GM12878 (cell line): ENCODE measurements at regions of chr17 and their contacts with region 1.

Region 1: DNA sequence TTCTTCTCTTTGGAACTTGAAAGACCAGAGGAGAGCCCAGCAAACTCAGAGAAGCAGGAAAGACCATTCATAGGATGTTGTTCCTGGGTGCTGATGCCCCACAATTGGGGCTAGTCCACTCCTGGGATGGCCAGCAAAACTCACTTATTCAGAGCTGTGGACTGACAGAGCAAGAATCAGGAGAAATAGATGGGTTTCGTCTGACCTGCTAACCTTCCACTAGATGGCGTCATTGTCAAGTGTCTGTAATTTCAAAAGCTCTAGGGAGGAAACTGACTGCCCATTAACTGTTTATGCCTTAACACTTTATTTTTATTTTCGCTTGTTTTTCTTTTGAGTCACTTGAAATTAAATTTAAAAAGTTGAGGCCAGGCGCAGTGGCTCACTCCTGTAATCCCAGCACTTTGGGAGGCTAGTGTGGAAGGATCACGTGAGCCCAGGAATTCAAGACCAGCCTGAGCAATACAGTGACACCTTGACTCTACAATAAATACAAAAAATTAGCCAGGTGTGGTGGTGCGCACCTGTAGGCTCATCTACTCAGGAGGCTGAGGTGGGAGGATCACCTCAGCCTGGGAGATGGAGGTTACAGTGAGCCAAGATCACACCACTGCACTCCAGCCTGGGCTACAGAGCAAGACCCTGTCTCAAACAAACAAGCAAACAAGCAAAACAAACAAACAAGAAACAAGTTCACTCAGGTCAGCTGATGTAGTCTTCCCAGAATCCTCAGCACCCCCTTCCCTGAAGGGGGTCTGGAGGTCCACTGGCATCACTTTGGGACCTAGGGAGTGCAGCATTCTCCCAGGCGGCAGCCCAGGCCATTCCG is 28.6 kb upstream of the MILR1 start:
- DNase-seq: no peak
- ATAC-seq: peak; percentile 91
- H3K4me3 ChIP-seq: no peak overlapping the region
- H3K27ac ChIP-seq: no peak overlapping the region
- H3K4me1 ChIP-seq: no peaks in the 10 kb centered on the region
- H3K27me3 ChIP-seq: no peaks in the 10 kb centered on the region
- CTCF ChIP-seq: peak; percentile 66 to 72 (median 69)
- EP300 ChIP-seq: no peak
- POLR2A ChIP-seq: no peak
- RAD21 ChIP-seq: peak; percentile 91

Region 2: GRCh38 chr17:64320613-64321553 is 99.5 kb before region 1 on chr17:
- CTCF ChIA-PET with region 1: interaction called, 627 read pairs
- POLR2A ChIA-PET with region 1: interaction called, 5 read pairs
- RAD21 ChIA-PET with region 1: interaction called, 75 read pairs
- SMC1A ChIA-PET with region 1: interaction called, 190 read pairs
- in situ Hi-C with region 1: loop called (anchors 5 kb)
- intact Hi-C with region 1: loop called (anchors 1 kb)
- DNase-seq: no peak
- ATAC-seq: peak; percentile 82
- H3K4me3 ChIP-seq: no peak overlapping the region
- H3K27ac ChIP-seq: no peak overlapping the region
- H3K4me1 ChIP-seq: no peaks in the 10 kb centered on the region
- H3K27me3 ChIP-seq: no peaks in the 10 kb centered on the region; a peak in 1 of 4 replicates
- CTCF ChIP-seq: peak; percentile 71 to 78 (median 75)
- EP300 ChIP-seq: no peak
- POLR2A ChIP-seq: no peak
- RAD21 ChIP-seq: peak; percentile 84

Region 3: DNA sequence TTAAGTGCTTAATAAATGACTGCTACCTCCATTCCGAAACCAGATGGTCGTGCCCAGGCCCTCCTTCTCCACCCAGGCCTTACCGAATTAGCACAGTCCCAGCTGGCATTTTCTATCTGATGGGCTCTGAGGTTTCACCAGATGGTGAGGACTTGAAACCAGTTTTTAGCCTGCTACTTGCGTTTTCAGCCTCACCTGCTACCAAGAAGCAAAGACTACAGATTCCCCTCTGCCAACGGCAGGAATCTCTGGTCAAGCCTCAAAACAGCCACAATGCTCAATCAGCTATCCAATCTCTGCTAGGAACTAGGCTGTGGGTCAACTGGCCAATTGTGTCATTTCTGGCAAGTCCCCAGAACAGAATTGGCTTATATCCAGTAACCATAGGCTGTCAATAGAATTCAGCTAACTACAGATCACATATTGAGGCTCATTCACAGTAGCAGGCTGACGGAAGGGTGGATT is 41.4 kb before region 1 on chr17:
- CTCF ChIA-PET with region 1: interaction called, 12 read pairs
- POLR2A ChIA-PET with region 1: no interaction called
- RAD21 ChIA-PET with region 1: interaction called, 3 read pairs
- SMC1A ChIA-PET with region 1: interaction called, 31 read pairs
- in situ Hi-C with region 1: no loop called
- intact Hi-C with region 1: no loop called
- DNase-seq: peak; percentile 72
- ATAC-seq: peak; percentile 93
- H3K4me3 ChIP-seq: no peak overlapping the region
- H3K27ac ChIP-seq: no peak overlapping the region
- H3K4me1 ChIP-seq: peaks cover 8% of the 10 kb centered on the region
- H3K27me3 ChIP-seq: no peaks in the 10 kb centered on the region
- CTCF ChIP-seq: no peak
- EP300 ChIP-seq: 0 out of 4 replicates have a peak, but pooled peaks of 1 of the 2 experiments have one; percentile 16
- POLR2A ChIP-seq: no peak
- RAD21 ChIP-seq: no peak

Region 4: GRCh38 chr17:64455993-64456885 is 35.9 kb after region 1 on chr17:
- CTCF ChIA-PET with region 1: interaction called, 12 read pairs
- POLR2A ChIA-PET with region 1: no interaction called
- RAD21 ChIA-PET with region 1: interaction called, 9 read pairs
- SMC1A ChIA-PET with region 1: interaction called, 10 read pairs
- in situ Hi-C with region 1: no loop called
- intact Hi-C with region 1: no loop called
- DNase-seq: no peak
- ATAC-seq: peak; percentile 81
- H3K4me3 ChIP-seq: no peak overlapping the region
- H3K27ac ChIP-seq: peak overlapping the region; percentile 65; the same call in 1 of the 2 replicates
- H3K4me1 ChIP-seq: peaks cover 20% of the 10 kb centered on the region
- H3K27me3 ChIP-seq: no peaks in the 10 kb centered on the region
- CTCF ChIP-seq: no peak
- EP300 ChIP-seq: no peak
- POLR2A ChIP-seq: no peak
- RAD21 ChIP-seq: no peak

Region 5: DNA sequence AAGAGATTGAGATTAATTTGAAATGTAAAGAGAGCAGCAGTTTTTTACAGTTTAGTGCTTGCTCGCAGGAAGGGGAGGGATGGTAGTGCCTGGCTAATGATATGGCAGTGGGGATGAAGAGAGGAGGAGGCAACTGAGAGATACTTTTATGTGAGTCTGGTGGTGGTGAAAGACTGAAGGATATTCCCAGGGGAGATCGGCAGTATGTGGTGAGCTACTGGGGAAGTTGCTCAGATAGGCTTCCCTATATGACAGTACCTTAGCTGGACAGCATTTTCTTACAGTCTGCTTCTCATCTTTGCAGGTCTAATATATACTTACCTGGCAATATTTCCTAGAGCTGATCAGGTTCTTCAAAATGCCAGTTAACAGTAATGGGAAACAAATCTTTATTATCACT is 95.1 kb after region 1 on chr17:
- CTCF ChIA-PET with region 1: interaction called, 15 read pairs
- POLR2A ChIA-PET with region 1: no interaction called
- RAD21 ChIA-PET with region 1: interaction called, 6 read pairs
- SMC1A ChIA-PET with region 1: interaction called, 8 read pairs
- in situ Hi-C with region 1: no loop called
- intact Hi-C with region 1: no loop called
- DNase-seq: no peak
- ATAC-seq: peak; percentile 78
- H3K4me3 ChIP-seq: no peak overlapping the region
- H3K27ac ChIP-seq: no peak overlapping the region
- H3K4me1 ChIP-seq: no peaks in the 10 kb centered on the region
- H3K27me3 ChIP-seq: no peaks in the 10 kb centered on the region
- CTCF ChIP-seq: no peak
- EP300 ChIP-seq: no peak
- POLR2A ChIP-seq: no peak
- RAD21 ChIP-seq: no peak

Region 6: DNA sequence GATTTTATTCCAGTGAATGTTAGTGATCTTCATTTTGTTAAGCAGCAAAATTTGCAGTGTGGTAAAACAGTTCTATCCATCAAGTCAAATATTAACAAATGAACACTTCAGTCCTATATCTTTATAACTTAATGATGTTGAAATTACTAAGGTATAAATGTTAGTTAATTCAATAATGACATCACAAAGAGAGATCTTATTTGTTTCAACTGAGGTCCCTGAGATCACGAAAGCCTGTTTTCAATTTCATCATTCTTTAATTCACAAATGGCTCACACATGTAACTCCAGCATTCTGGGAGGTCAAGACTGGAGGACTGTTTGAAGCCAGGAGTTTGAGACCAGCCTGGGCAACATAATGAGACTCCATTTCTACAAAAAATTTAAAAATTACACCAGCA is 227.9 kb after region 1 on chr17:
- CTCF ChIA-PET with region 1: interaction called, 122 read pairs
- POLR2A ChIA-PET with region 1: interaction called, 6 read pairs
- RAD21 ChIA-PET with region 1: interaction called, 100 read pairs
- SMC1A ChIA-PET with region 1: interaction called, 133 read pairs
- in situ Hi-C with region 1: loop called (anchors 5 kb)
- intact Hi-C with region 1: loop called (anchors 1 kb)
- DNase-seq: no peak
- ATAC-seq: no peak
- H3K4me3 ChIP-seq: no peak overlapping the region
- H3K27ac ChIP-seq: no peak overlapping the region
- H3K4me1 ChIP-seq: peaks cover 7% of the 10 kb centered on the region
- H3K27me3 ChIP-seq: no peaks in the 10 kb centered on the region
- CTCF ChIP-seq: no peak
- EP300 ChIP-seq: no peak
- POLR2A ChIP-seq: no peak
- RAD21 ChIP-seq: no peak